ENCODE measurements at regions of chr10 and their contacts with region 1.

Region 1: GRCh38 chr10:79202188-79203013 is 133.6 kb downstream of the ZMIZ1 start:
- DNase-seq: peak in 21 of 35 experiments; percentile 5 to 46 (median 17)
- ATAC-seq: peak in 1 of 4 experiments; percentile 34
- H3K4me3 ChIP-seq: no peak overlapping the region
- H3K4me3 Mint-ChIP-seq: no peak overlapping the region
- H3K27ac ChIP-seq: no peak overlapping the region
- H3K27ac Mint-ChIP-seq: no peak overlapping the region
- H3K4me1 ChIP-seq: no peaks in the 10 kb centered on the region
- H3K4me1 Mint-ChIP-seq: no peaks in the 10 kb centered on the region
- H3K27me3 ChIP-seq: no peaks in the 10 kb centered on the region
- H3K27me3 Mint-ChIP-seq: no peaks in the 10 kb centered on the region

Region 2: DNA sequence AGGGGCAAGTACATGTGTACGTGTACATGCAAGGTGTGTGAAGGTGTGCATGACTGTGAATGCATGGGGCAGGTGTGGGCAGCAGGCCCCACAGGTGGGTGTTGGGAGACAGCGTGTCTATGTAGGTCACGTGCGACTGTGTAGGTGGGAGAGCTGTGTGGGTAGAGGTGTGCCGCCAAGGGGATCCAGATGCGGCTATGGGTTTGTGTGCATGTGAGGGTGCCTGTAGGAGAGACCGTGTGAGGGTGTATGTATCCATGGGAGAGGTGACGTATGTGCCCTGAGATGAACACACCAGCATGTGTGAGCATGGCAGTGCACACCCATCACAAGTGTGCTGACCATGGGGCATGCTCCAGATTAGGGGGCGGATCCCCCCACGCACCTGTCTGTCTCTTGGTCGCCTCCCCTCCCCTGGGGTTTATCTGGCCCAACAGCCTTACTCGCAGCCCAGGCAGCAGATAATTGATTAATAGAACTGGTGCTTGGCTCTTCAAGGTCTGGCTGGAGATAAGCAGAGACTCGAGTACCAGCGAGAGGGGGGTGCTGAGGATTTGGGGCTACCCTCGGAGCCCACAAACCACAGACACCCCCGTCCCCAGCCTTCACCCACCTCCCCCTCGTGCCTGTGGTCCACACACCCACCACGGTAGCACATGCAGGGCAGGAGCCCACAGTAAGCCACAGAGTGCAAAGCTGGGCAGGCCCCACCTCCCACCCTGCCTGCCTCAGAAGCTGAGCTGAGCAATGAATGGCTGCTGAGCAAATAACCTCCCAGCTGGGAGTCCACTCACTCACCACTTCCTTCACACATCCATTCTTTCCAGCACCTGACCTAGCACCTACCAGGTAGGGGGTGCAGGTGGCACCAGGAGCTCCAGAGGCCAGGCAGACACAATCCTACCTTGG is 175.0 kb before region 1 on chr10:
- CTCF ChIA-PET with region 1: no interaction called
- POLR2A ChIA-PET with region 1: no interaction called
- DNase-seq: peak in 33 of 35 experiments; percentile 17 to 74 (median 57)
- ATAC-seq: peak; percentile 51 to 67 (median 62)
- H3K4me3 ChIP-seq: no peak overlapping the region
- H3K4me3 Mint-ChIP-seq: peak overlapping the region in 1 of 3 donors; percentile 41
- H3K27ac ChIP-seq: no peak overlapping the region
- H3K27ac Mint-ChIP-seq: peak overlapping the region; percentile 54 to 76
- H3K4me1 ChIP-seq: peaks cover 14 to 53% of the 10 kb centered on the region in 2 experiments
- H3K4me1 Mint-ChIP-seq: peaks cover 35 to 51% (median 44%) of the 10 kb centered on the region in 3 donors
- H3K27me3 ChIP-seq: peaks cover 0 to 13% of the 10 kb centered on the region in 2 experiments
- H3K27me3 Mint-ChIP-seq: no peaks in the 10 kb centered on the region

Region 3: DNA sequence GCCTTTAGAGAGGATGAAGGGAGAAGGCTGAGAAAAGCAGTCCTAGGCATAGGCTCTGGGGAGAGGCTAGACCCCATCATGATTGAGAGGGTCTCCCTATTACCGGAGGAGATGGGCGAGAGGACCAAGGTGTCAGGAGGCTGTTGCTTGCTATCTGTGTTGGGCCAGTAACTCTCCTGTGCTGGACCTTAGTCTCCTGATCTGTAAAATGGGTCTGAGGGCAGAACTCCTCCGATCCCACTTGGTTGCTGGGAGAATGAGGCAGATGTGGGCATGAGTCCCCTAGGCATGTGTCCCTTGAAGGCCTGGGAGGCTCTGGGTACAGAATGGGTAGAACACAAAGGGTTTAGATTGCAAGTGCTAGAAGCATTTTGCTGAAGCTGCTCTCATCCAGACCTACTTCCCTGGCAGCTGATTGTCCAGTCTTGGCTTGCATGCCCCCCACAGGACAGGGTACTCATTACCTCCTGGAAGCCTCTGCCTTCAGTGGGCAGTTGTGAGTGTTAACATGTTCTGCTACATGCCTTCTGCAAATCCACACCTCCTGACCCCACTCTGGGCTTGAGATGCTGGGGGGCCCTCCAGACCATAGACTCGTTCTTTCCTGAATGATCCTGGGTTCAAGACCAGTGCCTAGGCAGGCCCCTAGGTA is 129.3 kb before region 1 on chr10:
- CTCF ChIA-PET with region 1: interaction called in 1 of 2 experiments, 10 read pairs
- POLR2A ChIA-PET with region 1: no interaction called
- DNase-seq: no peak
- ATAC-seq: no peak
- H3K4me3 ChIP-seq: no peak overlapping the region
- H3K4me3 Mint-ChIP-seq: peak overlapping the region in 1 of 3 donors; percentile 95
- H3K27ac ChIP-seq: no peak overlapping the region
- H3K27ac Mint-ChIP-seq: no peak overlapping the region
- H3K4me1 ChIP-seq: peaks cover 5 to 20% of the 10 kb centered on the region in 2 experiments
- H3K4me1 Mint-ChIP-seq: peaks cover 39 to 58% (median 46%) of the 10 kb centered on the region in 3 donors
- H3K27me3 ChIP-seq: peaks cover 0 to 10% of the 10 kb centered on the region in 2 experiments
- H3K27me3 Mint-ChIP-seq: no peaks in the 10 kb centered on the region

Measured in T-cell (primary cell).